SK-N-SH (cell line): ENCODE measurements at regions of chr2 and their contacts with region 1.

Region 1: GRCh38 chr2:127649684-127650040 is 3.7 kb downstream of the GPR17 start:
- DNase-seq: peak; percentile 86
- H3K4me3 ChIP-seq: peak overlapping the region in 1 of 2 experiments; percentile 30; a peak in 1 of 4 replicates
- H3K27ac ChIP-seq: no peak overlapping the region; a peak in 1 of 4 replicates
- H3K4me1 ChIP-seq: peaks cover 0 to 50% of the 10 kb centered on the region in 2 experiments; a peak in 1 of 4 replicates
- H3K27me3 ChIP-seq: no peaks in the 10 kb centered on the region
- CTCF ChIP-seq: peak; percentile 84
- EP300 ChIP-seq: no peak
- RAD21 ChIP-seq: peak; percentile 69

Region 2: DNA sequence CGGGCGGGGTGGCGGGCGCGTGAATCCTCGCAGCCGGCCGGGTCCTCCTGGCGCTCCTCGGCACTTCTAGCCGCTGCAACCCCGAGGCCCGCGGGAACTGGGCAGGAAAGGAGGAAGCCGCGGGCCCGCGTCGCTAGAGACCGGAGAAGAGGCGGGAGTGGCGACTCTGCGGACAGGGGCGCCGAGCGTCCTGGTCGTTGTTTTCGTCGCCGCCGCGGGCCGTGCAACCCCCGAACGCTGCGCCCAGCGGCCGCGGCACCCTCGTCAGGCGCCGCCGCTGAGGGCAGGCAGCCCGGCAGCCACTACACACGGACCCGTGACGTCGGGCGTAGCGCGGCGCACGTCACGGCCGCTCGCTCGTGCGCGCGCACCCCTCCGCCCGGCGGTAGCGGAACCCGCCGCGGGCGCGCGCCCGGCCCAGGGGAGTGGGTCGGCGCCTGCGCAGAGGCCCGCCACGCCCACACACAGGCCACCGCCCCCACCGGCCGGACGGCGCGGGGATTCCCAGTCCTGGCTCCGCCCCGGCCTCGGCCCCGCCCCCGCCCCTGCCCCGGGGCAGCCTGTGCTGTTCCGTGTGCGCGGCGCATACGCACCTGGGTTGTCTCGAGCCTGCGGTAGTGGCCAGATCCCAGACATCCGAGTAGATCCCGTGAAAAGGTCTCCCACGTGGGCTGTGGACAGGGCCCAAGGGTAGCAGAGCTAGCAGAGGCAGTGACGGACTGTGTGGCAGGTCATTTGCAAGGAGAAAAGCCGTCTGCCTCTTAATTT is 261.8 kb before region 1 on chr2 and contains the start of gene MAP3K2:
- CTCF ChIA-PET with region 1: no interaction called
- POLR2A ChIA-PET with region 1: no interaction called
- DNase-seq: peak; percentile 100
- H3K4me3 ChIP-seq: peak within 1 kb of the TSS; percentile 76 to 89
- H3K27ac ChIP-seq: peak within 1 kb of the TSS; percentile 95 to 96
- H3K4me1 ChIP-seq: peaks cover 10 to 16% of the 10 kb centered on the region in 2 experiments; a peak in 3 of 4 replicates
- H3K27me3 ChIP-seq: no peaks in the 10 kb centered on the region
- CTCF ChIP-seq: no peak
- EP300 ChIP-seq: 0 out of 4 replicates have a peak, but pooled peaks of 1 of the 2 experiments have one; percentile 0
- RAD21 ChIP-seq: no peak
- polyA plus RNA-seq, gene MAP3K2: 2.7 and 4.0 TPM in 2 replicates

Region 3: GRCh38 chr2:127661949-127662510 is 12.4 kb after region 1 on chr2:
- CTCF ChIA-PET with region 1: interaction called, 11 read pairs
- POLR2A ChIA-PET with region 1: interaction called, 6 read pairs
- DNase-seq: no peak
- H3K4me3 ChIP-seq: no peak overlapping the region
- H3K27ac ChIP-seq: peak overlapping the region in 1 of 2 experiments; percentile 16; a peak in 1 of 4 replicates
- H3K4me1 ChIP-seq: peaks cover 0 to 21% of the 10 kb centered on the region in 2 experiments; a peak in 1 of 4 replicates
- H3K27me3 ChIP-seq: no peaks in the 10 kb centered on the region
- CTCF ChIP-seq: no peak
- EP300 ChIP-seq: no peak
- RAD21 ChIP-seq: no peak

Region 4: GRCh38 chr2:127675331-127676261 is 25.9 kb after region 1 on chr2 and contains the start of gene LIMS2:
- CTCF ChIA-PET with region 1: interaction called, 19 read pairs
- POLR2A ChIA-PET with region 1: no interaction called
- DNase-seq: peak; percentile 85
- H3K4me3 ChIP-seq: peak within 1 kb of the TSS; percentile 58 to 85
- H3K27ac ChIP-seq: no peak within 1 kb of the TSS
- H3K4me1 ChIP-seq: peaks cover 0 to 6% of the 10 kb centered on the region in 2 experiments; a peak in 1 of 4 replicates
- H3K27me3 ChIP-seq: peaks cover 14% of the 10 kb centered on the region; the same call in 1 of the 2 replicates
- CTCF ChIP-seq: 0 out of 2 replicates have a peak, but pooled peaks have one; percentile 16
- EP300 ChIP-seq: no peak
- RAD21 ChIP-seq: peak; percentile 57
- polyA plus RNA-seq, gene LIMS2: 2.2 and 2.7 TPM in 2 replicates

Region 5: DNA sequence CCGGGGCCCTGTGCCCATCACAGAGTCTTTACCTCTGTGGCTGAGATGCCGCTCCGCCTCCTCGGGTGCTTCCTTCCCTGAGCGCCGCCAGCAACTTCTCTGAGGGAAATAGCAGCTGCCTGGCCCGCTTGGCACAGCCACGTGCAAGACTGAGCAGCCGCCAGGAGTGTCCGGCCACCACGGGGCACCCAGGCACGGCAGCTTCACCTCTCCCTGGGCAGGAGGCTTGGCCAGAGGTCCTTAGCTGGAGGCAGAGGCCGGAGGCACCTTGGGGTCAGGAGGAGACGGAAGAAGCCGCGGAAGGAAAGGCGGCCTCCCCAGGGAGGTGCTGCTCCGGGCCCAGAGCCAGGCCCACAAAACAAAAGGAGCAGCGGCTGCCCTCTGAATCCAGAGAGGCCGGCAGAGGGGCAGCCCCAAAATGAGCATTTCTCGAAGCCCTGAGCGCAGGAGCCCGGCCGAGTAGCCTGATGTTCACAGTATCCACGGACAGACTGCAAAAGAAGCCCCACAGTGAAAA is 31.7 kb after region 1 on chr2:
- CTCF ChIA-PET with region 1: interaction called, 19 read pairs
- POLR2A ChIA-PET with region 1: no interaction called
- DNase-seq: peak; percentile 22
- H3K4me3 ChIP-seq: no peak overlapping the region
- H3K27ac ChIP-seq: no peak overlapping the region
- H3K4me1 ChIP-seq: peaks cover 0 to 4% of the 10 kb centered on the region in 2 experiments; a peak in 1 of 4 replicates
- H3K27me3 ChIP-seq: peaks cover 14% of the 10 kb centered on the region; the same call in 1 of the 2 replicates
- CTCF ChIP-seq: no peak
- EP300 ChIP-seq: no peak
- RAD21 ChIP-seq: no peak

Region 6: DNA sequence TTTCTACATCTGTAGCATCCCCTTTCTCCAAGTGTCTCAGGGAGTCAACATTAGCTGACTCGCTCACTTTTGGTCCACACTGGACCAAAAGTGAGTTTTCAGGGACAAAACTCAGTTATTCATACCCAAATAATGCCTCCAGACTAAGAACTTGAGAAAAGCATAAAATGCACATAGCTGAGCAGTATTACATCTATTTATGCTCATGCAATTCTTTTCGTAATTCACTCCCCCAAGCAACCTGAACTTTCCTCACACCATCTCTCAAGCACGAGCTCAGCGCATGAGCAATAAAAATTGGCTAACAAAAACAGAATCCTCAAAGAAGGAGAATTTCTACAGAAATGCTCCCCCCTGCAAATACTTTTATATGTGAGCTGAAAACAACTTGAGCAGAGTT is 68.6 kb after region 1 on chr2:
- CTCF ChIA-PET with region 1: no interaction called
- POLR2A ChIA-PET with region 1: no interaction called
- DNase-seq: no peak
- H3K4me3 ChIP-seq: no peak overlapping the region
- H3K27ac ChIP-seq: no peak overlapping the region
- H3K4me1 ChIP-seq: no peaks in the 10 kb centered on the region
- H3K27me3 ChIP-seq: no peaks in the 10 kb centered on the region
- CTCF ChIP-seq: no peak
- EP300 ChIP-seq: no peak
- RAD21 ChIP-seq: no peak

Region 7: DNA sequence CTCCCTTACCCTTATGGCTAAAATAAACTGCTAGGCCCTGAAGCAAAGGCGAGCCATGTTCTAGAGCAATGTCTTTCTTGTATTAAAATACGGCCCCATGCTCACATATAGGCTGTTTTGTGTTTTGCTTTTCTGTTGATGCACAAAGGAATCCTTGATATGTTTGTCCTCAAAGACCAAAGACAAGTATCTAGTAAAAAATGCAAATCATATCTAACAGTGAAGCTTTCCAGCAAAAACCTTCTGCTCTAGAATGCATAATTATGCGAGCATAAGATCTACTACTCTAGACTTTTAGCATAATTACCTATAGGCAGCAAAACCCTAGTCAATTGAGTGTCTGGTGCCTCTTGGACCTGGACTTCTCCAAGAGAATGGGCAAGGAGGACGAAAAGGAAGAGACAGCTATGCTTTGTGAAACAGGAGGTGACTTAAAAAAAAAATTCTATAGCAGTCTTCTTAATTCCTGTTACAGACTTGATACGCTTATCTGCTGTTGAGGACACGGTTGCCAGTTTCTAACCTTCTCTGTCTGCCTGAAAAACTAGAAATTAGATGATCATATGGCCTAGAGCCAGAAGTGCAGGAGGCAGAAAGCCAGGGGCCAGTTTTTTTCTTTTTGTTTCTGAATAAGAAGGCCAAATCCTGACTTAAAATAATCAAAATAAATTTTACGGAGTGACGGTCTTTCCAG is 237.6 kb after region 1 on chr2:
- CTCF ChIA-PET with region 1: no interaction called
- POLR2A ChIA-PET with region 1: no interaction called
- DNase-seq: no peak
- H3K4me3 ChIP-seq: peak overlapping the region; percentile 50 to 72
- H3K27ac ChIP-seq: peak overlapping the region; percentile 60 to 72; a peak in 3 of 4 replicates
- H3K4me1 ChIP-seq: peaks cover 10 to 22% of the 10 kb centered on the region in 2 experiments; a peak in 2 of 4 replicates
- H3K27me3 ChIP-seq: no peaks in the 10 kb centered on the region
- CTCF ChIP-seq: no peak
- EP300 ChIP-seq: no peak
- RAD21 ChIP-seq: no peak